GM13976 (cell line): ENCODE measurements at regions of chr3 and their contacts with region 1.

Region 1: DNA sequence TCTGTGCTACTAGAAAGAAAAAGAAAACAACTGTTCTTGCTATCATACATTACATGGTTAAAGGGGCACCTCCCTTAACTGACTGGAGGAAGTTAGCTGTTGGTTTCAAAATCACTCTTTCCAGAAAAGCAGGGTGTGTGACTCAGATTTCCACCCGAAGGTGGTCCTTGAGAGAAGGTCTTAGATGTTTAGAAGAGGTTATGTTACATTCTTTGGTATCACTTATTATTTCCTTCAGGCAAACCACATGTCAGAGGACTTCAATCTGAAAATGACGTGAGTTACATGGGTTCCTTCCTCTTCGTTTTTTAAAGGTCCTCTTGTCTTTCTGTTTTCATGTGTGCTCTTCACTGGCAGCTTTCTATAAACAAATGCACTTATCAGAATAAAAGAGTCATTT is 307.9 kb upstream of the CBLB start:
- DNase-seq: peak; percentile 33
- CTCF ChIP-seq: no peak

Region 2: GRCh38 chr3:105700575-105700974 is 476.2 kb before region 1 on chr3:
- in situ Hi-C with region 1: no loop called
- DNase-seq: no peak
- CTCF ChIP-seq: no peak

Region 3: GRCh38 chr3:105868742-105869530 is 307.8 kb before region 1 on chr3 and contains the start of gene CBLB:
- in situ Hi-C with region 1: loop called (anchors 25 kb)
- DNase-seq: peak; percentile 92
- CTCF ChIP-seq: no peak

Region 4: GRCh38 chr3:106068795-106069194 is 107.9 kb before region 1 on chr3:
- in situ Hi-C with region 1: no loop called
- DNase-seq: peak; percentile 40
- CTCF ChIP-seq: no peak

Region 5: DNA sequence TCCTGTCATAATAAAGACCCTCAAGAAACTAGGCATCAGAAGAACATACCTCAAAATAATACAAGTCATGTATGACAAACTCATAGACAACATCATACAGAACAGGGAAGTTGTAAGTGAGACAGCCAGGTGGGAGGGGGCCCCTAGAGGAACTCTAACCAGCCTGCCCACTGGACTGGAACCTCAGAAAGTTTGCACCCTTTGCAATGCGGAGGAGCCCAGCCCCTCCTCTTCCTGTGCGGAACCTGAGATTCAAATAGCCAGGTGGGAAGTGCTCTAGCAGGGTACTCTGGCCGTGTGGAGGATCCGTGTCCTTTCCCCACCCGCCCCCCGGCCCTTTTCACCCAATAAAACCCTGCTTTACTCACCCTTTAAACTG is 79.1 kb after region 1 on chr3:
- in situ Hi-C with region 1: loop called (anchors 10 kb)
- DNase-seq: peak; percentile 60
- CTCF ChIP-seq: no peak

Region 6: DNA sequence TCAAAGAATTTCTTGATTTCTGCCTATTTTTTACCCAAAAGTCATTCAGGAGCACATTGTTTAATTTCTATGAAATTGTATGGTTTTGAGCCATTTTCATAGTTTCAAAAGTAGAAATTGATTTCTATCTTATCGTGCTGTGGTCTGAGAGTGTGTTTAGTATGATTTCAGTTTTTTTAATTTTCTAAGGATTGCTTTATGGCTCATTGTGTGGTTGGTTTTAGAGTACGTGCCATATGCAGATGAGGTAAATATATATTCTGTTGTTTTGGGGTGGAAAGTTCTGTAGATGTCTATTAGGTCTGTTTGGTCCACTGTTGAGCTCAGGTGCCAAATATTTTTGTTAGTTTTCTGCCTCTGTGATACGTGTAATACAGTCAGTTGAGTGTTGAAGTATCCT is 179.1 kb after region 1 on chr3:
- in situ Hi-C with region 1: no loop called
- DNase-seq: no peak
- CTCF ChIP-seq: no peak